Dorsolateral prefrontal cortex (tissue), 120 donors: ENCODE measurements at regions of chr3 and their contacts with region 1.

Region 1: DNA sequence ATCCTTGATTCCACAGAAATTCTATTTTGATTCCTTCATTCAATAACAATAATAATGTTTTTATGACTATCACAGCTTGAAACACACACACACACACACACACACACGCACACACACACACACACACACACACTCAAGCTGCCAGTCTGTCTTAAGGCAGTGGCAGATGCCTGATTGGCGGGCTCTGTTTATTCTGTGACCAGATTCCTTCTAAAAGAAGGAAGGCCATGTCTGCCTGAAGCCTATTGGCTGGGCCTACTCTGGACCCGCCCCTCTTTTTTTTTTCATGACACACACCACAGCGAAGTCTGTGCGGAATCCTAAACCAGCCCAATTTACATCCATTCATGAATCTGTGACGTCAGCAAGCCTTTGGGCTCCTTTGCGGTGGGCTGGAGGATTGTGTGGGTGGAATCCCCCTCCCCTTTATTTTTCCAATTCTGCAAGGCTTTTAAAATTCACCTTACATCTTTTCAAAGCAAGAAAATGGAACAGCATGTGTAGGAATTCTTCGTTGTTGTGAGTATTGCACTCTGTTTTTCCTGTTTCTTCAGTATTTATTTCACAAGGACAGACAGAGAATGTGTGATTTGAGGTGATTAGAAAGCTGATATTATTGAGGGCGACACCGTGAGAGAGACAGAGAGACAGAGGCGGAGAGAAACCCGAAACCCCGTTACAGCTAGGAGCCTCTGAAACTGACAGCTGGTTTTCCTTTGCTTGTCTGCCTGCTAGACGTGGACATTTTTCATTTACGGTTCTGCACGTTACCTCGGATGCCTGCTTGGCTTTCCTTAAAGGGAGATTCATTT is at the start of gene MAP3K13:
- DNase-seq: peak; percentile 40 to 92 (median 80)
- H3K4me3 ChIP-seq: peak within 1 kb of the TSS; percentile 36 to 99 (median 76)
- H3K27ac ChIP-seq: peak within 1 kb of the TSS in 53 of 59 donors; percentile 11 to 89 (median 69)
- H3K27me3 ChIP-seq: no peaks in the 10 kb centered on the region
- CTCF ChIP-seq: peak in 4 of 56 donors; percentile 3 to 22 (median 12)
- total RNA-seq, gene MAP3K13: 30.8 to 75.4 (median 54.1) TPM

Region 2: GRCh38 chr3:184543843-184544512 is 819.1 kb before region 1 on chr3:
- intact Hi-C with region 1: no loop called
- DNase-seq: peak in 8 of 10 donors; percentile 62 to 90 (median 78)
- H3K4me3 ChIP-seq: peak overlapping the region in 34 of 59 donors; percentile 4 to 50 (median 30)
- H3K27ac ChIP-seq: peak overlapping the region in 3 of 59 donors; percentile 8 to 46 (median 44)
- H3K27me3 ChIP-seq: peaks cover 0 to 7% (median 0%) of the 10 kb centered on the region in 45 donors
- CTCF ChIP-seq: peak; percentile 87 to 98 (median 94)

Region 3: GRCh38 chr3:185328324-185329004 is 34.6 kb before region 1 on chr3:
- intact Hi-C with region 1: no loop called
- DNase-seq: no peak
- H3K4me3 ChIP-seq: no peak overlapping the region
- H3K27ac ChIP-seq: no peak overlapping the region
- H3K27me3 ChIP-seq: no peaks in the 10 kb centered on the region
- CTCF ChIP-seq: no peak

Region 4: DNA sequence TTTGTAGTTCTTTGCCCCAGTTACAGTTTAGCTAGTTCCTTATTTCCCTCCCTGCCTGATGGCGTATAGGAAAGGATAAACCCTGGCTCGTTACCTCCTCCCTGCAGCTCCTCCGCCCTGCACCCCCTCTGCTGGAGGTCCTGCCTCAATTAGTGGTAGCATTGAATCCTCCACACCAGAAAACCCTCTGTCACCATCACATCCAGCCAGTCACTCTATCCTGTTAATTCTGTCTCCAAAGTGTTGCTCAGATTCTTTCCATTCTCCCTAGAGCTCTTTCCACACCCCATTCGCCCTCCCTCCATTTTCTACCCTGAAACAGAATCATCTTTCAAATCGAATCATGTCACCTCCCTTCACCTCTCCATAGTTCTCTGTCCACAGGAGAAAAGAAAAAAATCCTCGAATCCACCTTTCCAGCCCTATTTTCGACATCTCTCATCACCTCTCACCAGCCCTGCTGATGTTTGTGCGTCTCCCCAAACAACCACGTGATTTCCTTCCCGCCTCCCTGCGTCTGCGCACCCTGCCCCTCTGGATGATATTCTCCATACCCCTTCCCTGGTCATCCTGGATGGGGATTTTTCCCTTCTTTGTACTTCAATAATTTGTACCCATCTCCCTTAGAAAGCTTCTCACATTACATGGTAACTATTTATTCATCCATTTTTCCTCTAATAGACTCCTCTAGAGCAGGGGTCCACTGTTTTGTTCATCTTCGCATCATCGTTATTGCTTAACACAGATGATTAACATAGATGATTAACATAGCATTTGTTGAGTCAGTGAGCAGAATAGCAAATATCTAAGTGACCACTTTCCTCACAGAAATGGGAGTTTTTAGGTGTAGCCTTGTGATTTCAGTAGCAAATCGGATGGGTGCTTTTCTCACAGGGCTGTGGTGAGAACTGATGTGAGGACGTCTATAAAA is 36.9 kb after region 1 on chr3:
- intact Hi-C with region 1: loop called in 1 of 2 experiments (anchors 5 kb)
- DNase-seq: peak in 5 of 10 donors; percentile 35 to 62 (median 55)
- H3K4me3 ChIP-seq: peak overlapping the region in 36 of 59 donors; percentile 5 to 49 (median 26)
- H3K27ac ChIP-seq: peak overlapping the region in 55 of 59 donors; percentile 1 to 84 (median 70)
- H3K27me3 ChIP-seq: no peaks in the 10 kb centered on the region
- CTCF ChIP-seq: no peak

Region 5: DNA sequence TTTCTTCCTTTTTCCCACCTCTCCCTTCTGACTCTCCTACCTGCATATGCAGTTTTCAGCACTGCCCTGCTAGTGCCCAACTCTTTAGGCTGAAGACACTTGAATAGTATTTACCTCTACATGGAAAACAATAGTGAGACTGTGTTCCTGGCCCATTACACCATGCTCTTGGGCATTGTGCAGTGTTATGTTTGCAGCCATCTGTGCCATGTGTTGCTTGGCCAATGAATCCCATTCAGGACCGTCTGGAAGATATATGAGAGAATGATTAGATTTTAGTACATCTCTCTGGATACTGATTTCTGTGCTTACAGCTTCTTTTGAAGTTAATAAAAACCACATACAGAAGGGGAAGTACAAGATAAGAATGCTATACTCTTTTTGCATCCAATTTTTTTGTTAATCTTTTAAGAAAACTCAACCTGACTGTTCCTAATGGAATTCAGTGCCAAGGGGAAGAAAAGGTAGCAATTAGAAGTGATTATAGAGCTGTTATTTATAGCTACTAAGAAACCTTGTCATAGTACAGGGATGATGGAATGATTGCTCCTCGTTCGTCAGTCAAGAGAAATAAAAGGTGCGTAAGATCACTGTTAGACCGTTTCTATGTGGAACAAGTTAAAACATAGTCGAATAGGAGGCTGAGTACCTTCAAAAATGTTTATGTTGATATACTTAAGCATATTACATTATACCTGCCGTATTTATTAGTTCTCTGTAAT is 76.8 kb after region 1 on chr3:
- intact Hi-C with region 1: loop called in 1 of 2 experiments (anchors 10 kb)
- DNase-seq: peak in 2 of 10 donors; percentile 10 to 44
- H3K4me3 ChIP-seq: peak overlapping the region in 1 of 59 donors; percentile 3
- H3K27ac ChIP-seq: peak overlapping the region in 40 of 59 donors; percentile 2 to 84 (median 44)
- H3K27me3 ChIP-seq: no peaks in the 10 kb centered on the region
- CTCF ChIP-seq: no peak

Region 6: DNA sequence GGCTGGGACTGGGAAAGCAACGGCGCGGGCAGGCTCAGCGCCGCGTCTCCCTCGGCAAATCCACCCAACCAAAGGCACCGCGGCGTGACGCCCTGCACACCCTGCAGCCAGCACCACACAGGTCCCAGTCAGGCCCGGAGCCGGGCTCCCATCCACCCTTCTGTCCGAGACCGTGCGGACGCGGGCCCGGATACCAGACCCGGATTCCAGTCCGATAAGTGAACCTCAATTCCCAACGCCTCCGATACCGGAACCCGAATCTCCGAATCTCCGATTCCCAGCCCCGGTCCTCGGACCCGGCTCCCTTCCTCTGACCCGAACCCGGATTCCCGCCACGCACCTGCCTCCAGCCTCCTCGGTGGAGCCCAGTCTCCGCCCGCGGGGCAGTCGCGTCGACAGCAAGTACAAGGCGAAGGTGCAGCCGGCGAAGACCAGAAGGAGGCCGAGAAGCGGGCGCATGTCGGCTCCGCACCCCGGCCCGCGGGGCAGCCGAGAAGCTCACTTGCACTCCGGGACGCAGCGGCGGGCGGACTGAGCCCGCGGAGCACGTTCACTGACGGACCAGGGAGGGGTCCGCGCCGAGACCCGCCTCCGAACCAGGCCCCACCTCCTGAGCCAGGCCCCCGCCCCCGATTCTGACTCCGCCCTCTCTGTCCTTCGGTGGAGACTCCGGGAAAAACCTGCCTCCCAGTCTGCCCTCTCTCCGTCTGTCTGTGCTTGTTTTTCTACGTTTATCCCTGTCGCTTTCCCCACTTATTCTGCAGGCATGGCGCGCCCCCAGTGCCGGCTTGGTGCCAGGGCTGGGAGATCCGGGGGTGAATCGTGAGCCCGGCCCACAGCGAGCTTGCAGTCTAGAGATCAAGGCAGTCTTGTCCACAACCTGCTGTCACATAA is 135.7 kb after region 1 on chr3 and contains the start of gene TMEM41A:
- intact Hi-C with region 1: loop called (anchors 5 kb)
- DNase-seq: peak; percentile 84 to 95 (median 92)
- H3K4me3 ChIP-seq: peak within 1 kb of the TSS; percentile 72 to 99 (median 94)
- H3K27ac ChIP-seq: peak within 1 kb of the TSS in 54 of 59 donors; percentile 16 to 91 (median 72)
- H3K27me3 ChIP-seq: no peaks in the 10 kb centered on the region
- CTCF ChIP-seq: peak in 30 of 56 donors; percentile 2 to 40 (median 24)
- total RNA-seq, gene TMEM41A: 9.4 to 19.2 (median 13.9) TPM

Region 7: DNA sequence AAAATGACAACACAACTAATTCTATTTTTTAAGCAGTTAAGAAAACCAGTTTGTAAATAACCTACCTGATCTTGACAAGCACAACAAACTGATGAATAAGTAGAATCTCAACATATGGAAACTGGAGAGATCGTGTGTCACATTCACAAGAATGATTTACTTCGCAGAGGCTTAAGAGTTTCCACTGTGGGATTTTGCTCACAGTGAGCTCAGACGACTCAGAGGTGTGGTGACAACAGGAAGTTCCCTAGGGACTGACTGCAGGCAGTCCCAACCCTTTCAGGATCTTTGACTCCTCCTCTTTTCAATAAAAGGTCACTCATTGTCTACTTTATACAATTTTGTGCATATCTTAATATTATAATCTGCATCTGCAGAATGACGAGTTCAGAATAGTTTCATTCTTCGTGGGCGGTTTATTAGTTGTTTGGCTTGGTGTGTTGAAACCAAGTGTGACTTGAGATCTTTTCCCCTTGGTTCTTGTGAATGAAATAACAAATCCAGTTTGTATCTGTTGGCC is 189.4 kb after region 1 on chr3 and contains the start of gene LIPH:
- intact Hi-C with region 1: loop called in 1 of 2 experiments (anchors 10 kb)
- DNase-seq: no peak
- H3K4me3 ChIP-seq: no peak within 1 kb of the TSS
- H3K27ac ChIP-seq: no peak within 1 kb of the TSS
- H3K27me3 ChIP-seq: no peaks in the 10 kb centered on the region
- CTCF ChIP-seq: no peak
- total RNA-seq, gene LIPH: 0.13 to 6.5 (median 0.80) TPM in 108 of 120 experiments, not detected in the others

Region 8: DNA sequence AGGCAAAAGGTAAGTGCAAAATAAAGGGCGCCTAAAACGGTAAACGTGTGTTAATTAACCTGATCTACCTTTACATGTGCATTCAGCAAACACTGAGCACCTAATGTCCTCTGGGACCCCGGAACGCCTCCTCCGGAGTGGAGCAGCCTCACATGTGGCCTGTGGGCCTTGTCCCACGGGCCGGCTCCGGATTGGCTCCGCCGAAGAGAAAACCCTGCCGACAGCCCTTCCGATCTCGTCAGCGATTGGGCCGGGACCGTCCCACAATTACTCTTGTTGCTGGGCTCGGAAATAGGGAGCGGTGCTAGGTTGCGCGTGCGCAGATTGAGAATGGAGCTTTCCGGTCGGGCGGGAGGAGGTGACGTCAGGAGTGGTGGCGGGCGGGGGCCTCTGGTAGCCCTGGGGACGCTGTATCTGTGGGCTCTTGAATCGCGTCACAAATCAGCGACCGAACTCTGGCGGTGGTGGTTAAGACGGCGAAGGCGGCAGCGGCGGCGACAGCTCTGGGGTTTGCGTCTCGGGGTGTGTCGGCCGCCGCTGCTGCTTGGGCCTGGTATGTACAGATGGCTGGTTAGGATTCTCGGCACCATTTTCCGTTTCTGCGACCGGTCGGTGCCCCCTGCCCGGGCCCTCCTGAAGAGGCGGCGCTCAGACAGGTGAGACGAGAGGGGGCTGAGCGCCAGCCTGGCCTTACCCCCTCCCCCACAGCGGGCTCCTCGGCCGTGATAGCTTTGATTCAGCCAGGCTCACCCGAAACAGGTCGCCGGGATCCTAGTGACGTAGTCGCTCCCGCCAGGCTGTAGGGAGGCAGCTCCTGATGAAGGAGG is 223.0 kb after region 1 on chr3 and contains the start of gene SENP2:
- intact Hi-C with region 1: loop called (anchors 10 kb)
- DNase-seq: peak; percentile 99 to 100 (median 99)
- H3K4me3 ChIP-seq: peak within 1 kb of the TSS; percentile 61 to 100 (median 95)
- H3K27ac ChIP-seq: peak within 1 kb of the TSS; percentile 37 to 98 (median 92)
- H3K27me3 ChIP-seq: no peaks in the 10 kb centered on the region
- CTCF ChIP-seq: peak in 23 of 56 donors; percentile 3 to 56 (median 27)
- total RNA-seq, gene SENP2: 51.6 to 106 (median 75.9) TPM